ENCODE measurements at regions of chr21 and their contacts with region 1.

Region 1: DNA sequence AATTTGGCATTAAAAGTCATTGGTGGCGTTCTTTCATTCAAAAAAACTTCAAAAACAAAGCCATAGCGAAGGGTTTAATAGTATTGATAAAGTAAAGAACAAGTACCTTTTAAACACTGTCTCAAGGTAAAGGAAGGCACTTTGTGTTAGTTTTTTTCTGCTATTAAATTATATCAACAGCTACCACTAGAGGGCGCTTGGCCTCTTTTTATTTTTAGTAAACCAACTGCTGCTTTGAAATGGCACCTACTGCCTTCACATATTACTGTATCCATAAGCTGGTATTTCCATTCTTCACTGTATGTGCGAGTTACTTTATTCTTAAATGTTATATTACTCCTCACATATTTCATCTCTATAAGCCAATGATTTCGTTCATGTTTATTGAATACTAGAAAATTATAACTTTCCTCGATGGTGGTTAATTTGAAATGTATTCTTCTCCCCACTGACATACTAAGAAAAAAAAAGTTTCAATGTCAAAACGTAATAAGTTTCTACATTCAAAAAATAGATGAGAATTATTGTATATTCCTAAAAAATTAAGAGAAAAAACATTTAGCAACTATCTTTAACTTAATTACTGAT is 125.7 kb upstream of the CXADR start:
- DNase-seq: no peak
- H3K4me3 ChIP-seq: no peak overlapping the region
- H3K27ac ChIP-seq: no peak overlapping the region
- H3K4me1 ChIP-seq: no peaks in the 10 kb centered on the region
- H3K27me3 ChIP-seq: no peaks in the 10 kb centered on the region
- CTCF ChIP-seq: peak; percentile 41 to 67 (median 54)

Region 2: GRCh38 chr21:17089091-17089502 is 298.0 kb before region 1 on chr21:
- intact Hi-C with region 1: no loop called
- DNase-seq: no peak
- H3K4me3 ChIP-seq: no peak overlapping the region
- H3K27ac ChIP-seq: no peak overlapping the region
- H3K4me1 ChIP-seq: no peaks in the 10 kb centered on the region
- H3K27me3 ChIP-seq: no peaks in the 10 kb centered on the region
- CTCF ChIP-seq: no peak

Region 3: DNA sequence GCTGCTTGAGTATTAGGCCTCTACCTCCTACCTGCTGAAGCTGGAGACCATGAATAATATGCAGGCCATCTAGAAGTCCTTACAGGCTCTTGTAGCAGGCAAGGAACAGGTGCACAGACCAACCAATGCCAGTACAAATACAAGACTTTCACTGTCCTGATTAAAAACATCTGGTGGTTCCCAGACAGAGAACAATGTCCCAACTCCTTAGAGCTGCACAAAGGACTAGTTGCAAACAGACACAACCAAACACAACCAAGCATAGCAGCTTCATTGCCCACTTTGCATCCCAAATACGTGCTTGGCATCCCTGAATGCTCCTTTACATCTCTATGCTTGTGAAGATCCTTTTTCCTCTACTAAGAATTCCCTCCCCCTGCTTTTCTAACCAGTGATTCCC is 27.6 kb after region 1 on chr21:
- intact Hi-C with region 1: no loop called
- DNase-seq: no peak
- H3K4me3 ChIP-seq: no peak overlapping the region
- H3K27ac ChIP-seq: no peak overlapping the region
- H3K4me1 ChIP-seq: no peaks in the 10 kb centered on the region
- H3K27me3 ChIP-seq: no peaks in the 10 kb centered on the region
- CTCF ChIP-seq: no peak

Region 4: GRCh38 chr21:17585875-17586450 is 198.8 kb after region 1 on chr21:
- intact Hi-C with region 1: loop called (anchors 1 kb)
- DNase-seq: no peak
- H3K4me3 ChIP-seq: no peak overlapping the region
- H3K27ac ChIP-seq: no peak overlapping the region
- H3K4me1 ChIP-seq: no peaks in the 10 kb centered on the region
- H3K27me3 ChIP-seq: no peaks in the 10 kb centered on the region
- CTCF ChIP-seq: peak in 2 of 3 experiments; percentile 48 to 54

Measured in ascending aorta (tissue), 2 donors.